Activated T-helper 2 cell treated with anti-CD3 and anti-CD28 coated beads, Interferon-gamma antibody, Interleukin-2, Interleukin-4, amounts not matched to agents 10 μg/mL and 5 μg/mL and 100 μg/mL, durations not matched to agents 14 hours and 24 hours and 36 hours (primary cell): ENCODE measurements at regions of chr7 and their contacts with region 1.

Region 1: DNA sequence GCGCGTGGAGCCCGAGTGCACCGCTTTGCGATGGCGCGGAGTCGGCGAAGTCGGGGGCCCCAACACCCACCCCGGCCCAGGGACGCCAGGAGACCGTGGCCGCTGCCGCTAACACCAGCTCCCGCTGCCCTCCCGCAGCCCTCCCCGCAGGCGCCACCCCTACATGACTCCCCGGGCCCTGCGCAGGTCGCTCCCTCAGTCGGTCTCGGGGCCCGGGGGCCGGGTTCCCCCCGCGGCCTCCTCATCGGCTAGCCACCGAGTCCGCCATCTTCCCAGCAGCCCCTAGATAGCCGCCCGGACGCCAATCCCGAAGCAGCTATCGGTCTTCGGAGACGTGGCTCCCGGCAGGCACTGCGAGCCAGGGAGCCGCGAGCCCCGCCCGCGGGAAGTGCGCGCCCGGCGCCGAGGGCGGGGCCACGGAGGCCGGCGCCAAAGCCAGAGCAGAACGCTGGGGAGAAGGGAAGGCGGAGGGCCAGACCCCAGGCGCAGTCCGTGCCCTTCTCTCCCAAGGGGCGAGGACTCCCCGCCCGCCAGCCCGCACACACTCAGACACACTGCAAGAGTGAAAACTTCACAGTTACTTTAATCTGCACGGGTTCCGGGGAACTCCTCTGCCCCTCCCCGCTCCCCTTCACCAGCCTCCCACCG is at the start of gene FASTK:
- DNase-seq: peak; percentile 86
- H3K4me3 Mint-ChIP-seq: peak within 1 kb of the TSS; percentile 94
- H3K27ac Mint-ChIP-seq: peak within 1 kb of the TSS; percentile 75
- H3K4me1 Mint-ChIP-seq: peaks cover 22% of the 10 kb centered on the region
- H3K27me3 Mint-ChIP-seq: peaks cover 6% of the 10 kb centered on the region
- total RNA-seq, gene FASTK: 83.2 and 85.2 TPM in 2 replicates

Region 2: DNA sequence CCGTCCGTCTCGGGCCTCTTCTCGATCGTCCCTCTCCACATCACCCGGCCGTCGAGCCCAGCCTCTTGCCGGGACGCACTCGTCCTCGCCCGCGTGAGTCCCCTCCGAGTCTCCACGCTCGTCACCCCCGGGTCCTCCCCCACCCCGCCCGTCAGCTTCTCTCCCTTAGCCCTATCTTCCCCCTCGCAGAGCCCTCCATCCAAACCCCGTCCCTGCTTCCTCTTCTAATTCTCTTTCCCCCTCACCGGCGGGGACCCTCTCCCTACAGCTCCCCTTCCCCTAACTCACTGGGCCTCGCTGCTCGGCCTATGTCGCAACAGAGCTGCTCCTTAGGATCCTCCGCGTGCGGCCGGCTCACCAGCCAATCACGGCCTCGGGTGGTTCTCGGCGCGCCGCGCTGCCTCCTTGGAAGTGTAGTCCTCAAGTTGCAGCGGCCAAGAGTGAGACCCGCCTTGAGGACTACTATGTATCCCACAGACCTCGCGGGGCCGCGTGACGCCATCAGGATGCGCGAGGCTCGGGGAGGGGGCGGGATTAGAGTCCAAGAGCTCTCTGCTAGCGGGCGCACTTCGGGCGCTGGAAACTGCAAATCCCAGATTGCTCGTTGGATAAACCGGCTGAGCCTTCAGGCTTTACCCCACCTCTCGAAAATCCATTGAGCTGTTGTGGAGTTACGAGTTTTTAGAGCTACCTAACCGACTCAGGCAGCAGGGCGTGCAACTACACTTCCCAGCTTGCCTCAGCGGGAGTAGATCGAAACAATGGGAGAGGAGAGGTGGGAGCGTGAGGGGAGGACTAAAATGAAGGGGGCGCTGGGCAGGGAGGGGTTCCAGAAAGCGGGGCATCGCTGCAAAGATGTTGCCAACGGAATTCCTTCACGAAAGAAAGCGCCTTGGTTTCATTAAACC is 146.5 kb after region 1 on chr7 and contains the start of gene ABCF2:
- intact Hi-C with region 1: loop called (anchors 10 kb)
- DNase-seq: peak; percentile 95
- H3K4me3 Mint-ChIP-seq: peak within 1 kb of the TSS; percentile 99
- H3K27ac Mint-ChIP-seq: peak within 1 kb of the TSS; percentile 90
- H3K4me1 Mint-ChIP-seq: peaks cover 27% of the 10 kb centered on the region
- H3K27me3 Mint-ChIP-seq: peaks cover 4% of the 10 kb centered on the region
- total RNA-seq, gene ABCF2: 63.4 and 69.2 TPM in 2 replicates